A549 (cell line): ENCODE measurements at regions of chr2 and their contacts with region 1.

Region 1: DNA sequence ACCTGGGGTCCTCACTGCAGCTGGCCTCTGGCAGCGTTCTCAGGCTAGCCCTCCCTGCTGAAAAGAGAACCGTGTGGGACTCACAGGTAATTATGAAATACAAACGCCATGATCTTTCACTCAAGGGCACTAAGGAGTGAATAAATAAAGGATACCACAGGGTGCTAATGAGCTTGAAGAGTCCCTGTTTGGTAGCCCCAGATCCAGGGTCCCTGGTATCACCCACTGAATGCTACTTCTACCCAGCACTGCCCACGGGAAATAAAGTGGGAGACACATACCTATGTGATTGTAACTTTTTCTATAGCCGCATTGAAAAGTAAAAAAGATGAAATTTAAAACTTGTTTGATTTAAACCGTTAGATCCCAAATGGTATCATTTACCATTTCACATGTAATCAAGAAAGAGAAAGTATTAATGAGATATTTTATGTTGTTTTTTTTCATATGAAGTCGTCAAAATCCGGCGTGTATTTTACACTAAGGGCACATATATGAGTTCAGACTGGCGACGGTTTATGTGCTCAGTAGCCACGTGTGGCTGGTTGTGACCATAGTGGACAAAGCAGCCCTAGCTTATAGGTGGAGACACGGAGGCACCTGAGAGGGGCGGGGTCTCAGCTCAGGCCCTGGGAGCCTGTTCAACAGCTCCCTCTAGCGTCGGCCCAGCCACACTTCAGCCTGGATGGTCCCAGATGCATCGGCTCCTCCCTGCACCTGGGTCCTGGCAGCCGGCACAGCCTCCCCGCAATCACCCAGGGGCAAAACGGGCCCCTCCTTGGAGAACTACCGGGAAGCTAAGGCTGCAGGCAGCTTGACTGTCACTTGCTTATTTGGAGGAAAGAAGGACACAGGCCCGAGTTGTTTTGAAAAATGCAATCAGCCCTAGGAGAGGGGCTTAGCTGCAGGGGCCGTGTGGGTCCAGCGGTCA is 39.2 kb downstream of the ODC1 start:
- DNase-seq: peak; percentile 93 to 94
- ATAC-seq: peak; percentile 58 to 80
- H3K4me3 ChIP-seq: peak overlapping the region; percentile 13; the same call in 2 of the 3 replicates
- H3K27ac ChIP-seq: peak overlapping the region; percentile 93 to 95
- H3K4me1 ChIP-seq: peaks cover 63% of the 10 kb centered on the region
- CTCF ChIP-seq: peak; percentile 99
- EP300 ChIP-seq: no peak; a peak in 1 of 5 replicates
- POLR2A ChIP-seq: no peak
- RAD21 ChIP-seq: peak; percentile 99

Region 2: DNA sequence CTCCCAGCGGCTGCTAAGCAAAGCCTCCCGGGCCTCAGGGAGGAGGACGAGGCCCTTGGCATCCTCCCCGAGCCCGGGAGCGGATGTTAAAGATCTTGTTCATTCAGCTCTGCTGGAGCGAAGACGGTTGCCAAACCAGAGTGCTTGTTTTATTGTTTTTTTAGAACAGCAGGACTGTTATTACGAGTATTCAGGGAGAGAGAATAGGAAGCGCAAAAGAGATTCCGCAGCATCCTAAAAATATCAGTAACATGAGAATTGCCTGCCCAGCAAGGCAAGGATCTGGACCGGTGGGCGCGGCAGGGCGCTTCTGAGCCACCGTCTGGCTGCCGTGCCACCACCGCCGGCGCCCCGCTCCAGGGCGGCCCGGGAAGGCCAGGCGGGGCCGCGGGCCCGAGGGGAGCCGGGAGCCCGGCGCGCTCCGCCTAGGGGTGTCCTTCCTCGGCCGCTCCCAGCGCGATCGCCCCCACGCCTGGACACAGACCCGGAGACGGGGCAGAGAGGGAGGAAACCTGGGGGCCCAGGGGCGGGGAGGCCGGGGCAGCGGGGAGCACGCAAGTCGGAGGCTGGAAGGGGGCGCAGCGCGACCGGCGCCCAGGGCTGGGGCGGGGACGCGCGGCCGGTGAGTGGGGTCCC is 329.6 kb before region 1 on chr2:
- CTCF ChIA-PET with region 1: interaction called, 25 read pairs
- POLR2A ChIA-PET with region 1: no interaction called
- DNase-seq: peak; percentile 36 to 58
- ATAC-seq: peak; percentile 75 to 82
- H3K4me3 ChIP-seq: peak overlapping the region; percentile 70
- H3K27ac ChIP-seq: peak overlapping the region; percentile 77 to 92
- H3K4me1 ChIP-seq: 0 out of 3 replicates have a peak, but pooled peaks cover 3% of the 10 kb centered on the region
- CTCF ChIP-seq: no peak
- EP300 ChIP-seq: no peak
- POLR2A ChIP-seq: no peak
- RAD21 ChIP-seq: no peak

Region 3: GRCh38 chr2:10170256-10170655 is 238.7 kb before region 1 on chr2:
- CTCF ChIA-PET with region 1: interaction called, 53 read pairs
- POLR2A ChIA-PET with region 1: no interaction called
- DNase-seq: no peak
- ATAC-seq: no peak
- H3K4me3 ChIP-seq: no peak overlapping the region
- H3K27ac ChIP-seq: no peak overlapping the region
- H3K4me1 ChIP-seq: peaks cover 11% of the 10 kb centered on the region
- CTCF ChIP-seq: no peak
- EP300 ChIP-seq: no peak
- POLR2A ChIP-seq: no peak
- RAD21 ChIP-seq: no peak

Region 4: GRCh38 chr2:10267551-10268465 is 141.1 kb before region 1 on chr2:
- CTCF ChIA-PET with region 1: interaction called, 86 read pairs
- POLR2A ChIA-PET with region 1: interaction called, 4 read pairs
- DNase-seq: no peak
- ATAC-seq: no peak
- H3K4me3 ChIP-seq: no peak overlapping the region
- H3K27ac ChIP-seq: no peak overlapping the region; a peak in 1 of 6 replicates
- H3K4me1 ChIP-seq: peaks cover 22% of the 10 kb centered on the region
- CTCF ChIP-seq: no peak
- EP300 ChIP-seq: no peak
- POLR2A ChIP-seq: no peak
- RAD21 ChIP-seq: no peak

Region 5: GRCh38 chr2:10319853-10320574 is 88.9 kb before region 1 on chr2:
- CTCF ChIA-PET with region 1: interaction called, 61 read pairs
- POLR2A ChIA-PET with region 1: no interaction called
- DNase-seq: no peak
- ATAC-seq: no peak
- H3K4me3 ChIP-seq: no peak overlapping the region
- H3K27ac ChIP-seq: no peak overlapping the region
- H3K4me1 ChIP-seq: peaks cover 19% of the 10 kb centered on the region
- CTCF ChIP-seq: no peak
- EP300 ChIP-seq: no peak
- POLR2A ChIP-seq: no peak
- RAD21 ChIP-seq: no peak

Region 6: DNA sequence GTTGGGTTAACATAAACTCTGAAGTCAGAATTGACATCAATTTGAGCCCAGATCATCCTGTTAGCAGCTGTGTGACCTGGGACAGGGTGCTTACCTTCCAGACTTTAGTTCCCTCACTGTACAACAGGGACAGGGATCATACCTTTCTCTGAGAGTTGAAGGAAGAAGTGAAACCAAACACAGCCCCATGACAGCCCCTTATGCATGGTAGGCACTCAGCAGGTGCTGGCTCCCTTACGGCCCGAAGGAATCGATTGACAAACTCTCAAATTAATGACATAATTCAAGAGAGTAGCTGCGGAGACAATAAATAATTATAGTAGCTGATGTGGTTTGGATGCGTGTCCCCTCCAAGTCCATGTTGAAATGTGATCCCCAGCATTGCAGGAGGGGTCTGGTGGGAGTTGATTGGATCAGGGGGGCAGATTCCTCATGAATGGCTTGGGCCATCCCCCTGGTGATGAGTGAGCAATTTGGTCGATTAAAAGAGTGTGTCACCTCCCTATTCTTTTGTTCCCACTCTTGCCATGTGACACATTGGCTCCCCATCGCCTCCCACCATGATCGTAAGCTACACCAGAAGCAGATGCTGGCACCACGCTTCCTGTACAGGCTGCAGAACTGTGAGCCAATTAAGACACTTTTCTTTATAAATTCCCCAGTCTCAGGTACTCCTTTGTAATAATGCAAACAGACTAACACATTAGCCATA is 33.2 kb before region 1 on chr2:
- CTCF ChIA-PET with region 1: interaction called, 17 read pairs
- POLR2A ChIA-PET with region 1: interaction called, 3 read pairs
- DNase-seq: no peak
- ATAC-seq: no peak
- H3K4me3 ChIP-seq: no peak overlapping the region
- H3K27ac ChIP-seq: no peak overlapping the region
- H3K4me1 ChIP-seq: peaks cover 14% of the 10 kb centered on the region
- CTCF ChIP-seq: no peak
- EP300 ChIP-seq: no peak
- POLR2A ChIP-seq: no peak
- RAD21 ChIP-seq: no peak

Region 7: DNA sequence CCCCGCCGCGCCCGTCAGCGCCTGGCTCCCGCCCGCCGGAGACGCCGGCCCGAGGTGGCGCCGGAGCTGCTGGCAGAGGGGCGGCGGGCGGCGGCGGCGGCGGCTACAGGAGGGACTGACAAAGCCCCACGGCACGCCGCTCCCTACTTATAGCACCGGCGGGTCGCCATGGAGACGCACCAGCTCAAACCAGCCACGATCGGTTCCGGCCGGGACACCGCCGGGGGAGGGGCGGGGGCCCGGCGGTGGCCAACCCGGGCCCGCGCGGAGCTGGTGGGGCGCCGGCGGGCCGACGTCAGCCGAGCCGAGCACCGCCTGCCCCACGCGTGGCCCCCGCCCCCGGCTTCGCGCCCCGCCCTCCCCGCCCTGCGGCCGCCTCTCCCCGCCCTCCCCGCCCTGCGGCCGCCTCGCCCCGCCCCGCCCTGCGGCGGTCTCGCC is 39.3 kb after region 1 on chr2 and contains the start of gene ODC1:
- CTCF ChIA-PET with region 1: interaction called, 10 read pairs
- POLR2A ChIA-PET with region 1: no interaction called
- DNase-seq: peak; percentile 80 to 93
- ATAC-seq: peak; percentile 69 to 72
- H3K4me3 ChIP-seq: peak within 1 kb of the TSS; percentile 78
- H3K27ac ChIP-seq: peak within 1 kb of the TSS; percentile 90 to 98
- H3K4me1 ChIP-seq: peaks cover 56% of the 10 kb centered on the region
- CTCF ChIP-seq: no peak
- EP300 ChIP-seq: no peak; a peak in 2 of 5 replicates
- POLR2A ChIP-seq: peak; percentile 59
- RAD21 ChIP-seq: no peak
- polyA plus RNA-seq, gene ODC1: 198 and 265 TPM in 2 replicates